Tibial artery (tissue), 4 donors: ENCODE measurements at regions of chr5 and their contacts with region 1.

Region 1: DNA sequence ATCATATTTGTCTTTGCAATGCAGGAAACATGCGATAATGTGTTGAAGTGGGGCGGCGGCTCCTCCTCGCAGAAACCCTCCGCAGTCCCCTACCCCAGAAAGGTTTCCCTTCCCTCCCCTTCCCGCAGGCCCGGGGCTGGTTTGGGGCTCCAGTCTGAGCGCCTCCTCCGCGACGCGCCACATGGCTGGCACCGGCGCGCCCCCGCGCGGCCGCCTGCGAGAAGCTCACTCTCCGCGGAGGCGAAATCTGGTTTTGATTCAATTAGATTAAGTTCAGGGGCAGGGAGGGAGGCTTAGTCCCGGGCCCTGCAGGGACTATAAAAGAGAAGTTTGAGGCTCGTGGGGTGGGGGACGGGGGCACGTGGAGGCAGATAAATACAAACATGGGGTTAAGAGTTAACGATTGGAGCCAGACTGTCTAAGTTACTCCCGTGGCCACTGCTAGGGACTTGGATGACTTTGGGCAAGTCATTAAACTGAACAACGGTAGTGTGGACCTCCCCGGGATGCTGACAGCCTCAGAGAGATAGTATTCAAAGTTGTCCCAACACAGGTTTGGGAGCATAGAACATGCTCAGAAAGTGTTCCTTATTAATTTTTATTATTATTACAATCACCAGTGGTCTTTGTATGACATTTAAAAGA is 69.4 kb downstream of the MSX2 start:
- DNase-seq: peak; percentile 51 to 72
- H3K4me3 ChIP-seq: no peak overlapping the region
- H3K27ac ChIP-seq: no peak overlapping the region
- H3K4me1 ChIP-seq: peaks cover 0 to 8% (median 3%) of the 10 kb centered on the region in 4 donors
- H3K27me3 ChIP-seq: peaks cover 0 to 61% of the 10 kb centered on the region in 2 donors
- CTCF ChIP-seq: peak; percentile 78 to 80

Region 2: DNA sequence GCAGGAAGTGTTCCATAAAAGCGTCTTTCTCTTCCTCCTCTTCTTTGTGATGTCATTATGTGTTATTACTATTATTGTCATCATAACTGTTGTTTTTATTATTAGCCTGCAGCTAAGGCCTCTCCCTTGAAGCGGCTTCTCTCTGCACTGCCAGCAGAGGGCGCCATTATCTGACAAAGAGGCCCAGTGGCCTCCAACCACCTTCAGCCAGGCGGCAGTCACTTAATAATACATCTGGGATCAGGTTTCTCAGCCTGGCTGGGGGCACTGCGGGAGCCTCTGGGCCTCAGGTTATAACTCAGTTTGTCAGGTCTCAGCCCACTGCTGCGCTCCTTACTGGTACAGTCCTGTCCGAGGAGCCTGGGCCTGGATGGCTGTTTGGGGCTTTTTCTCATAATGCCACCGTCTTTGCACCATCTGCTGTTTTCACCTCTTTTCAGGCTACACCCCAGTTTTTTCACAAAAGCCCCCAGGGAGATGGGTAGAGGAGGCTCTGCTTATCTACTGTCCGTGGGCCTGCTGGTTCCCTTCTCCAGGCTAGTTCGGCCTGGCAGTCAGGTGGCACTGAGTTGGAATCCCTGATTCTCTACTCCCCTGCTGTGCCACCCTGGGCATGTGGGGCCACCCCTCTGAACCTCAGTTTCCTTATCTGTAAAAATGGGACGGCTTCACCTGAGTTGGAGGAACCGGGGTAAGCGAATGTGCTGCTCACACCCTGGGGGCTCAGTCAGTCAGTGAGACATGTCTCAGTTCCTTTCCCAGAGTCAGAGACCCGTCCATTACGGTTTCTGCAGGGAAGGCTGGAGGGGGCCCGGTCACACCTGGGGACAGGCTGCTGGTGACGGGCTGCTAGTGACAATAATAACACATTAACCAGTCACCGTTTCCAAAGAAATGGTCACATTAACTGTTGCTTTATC is 466.2 kb before region 1 on chr5:
- intact Hi-C with region 1: loop called (anchors 5 kb)
- DNase-seq: peak in 1 of 2 donors; percentile 41
- H3K4me3 ChIP-seq: no peak overlapping the region
- H3K27ac ChIP-seq: no peak overlapping the region
- H3K4me1 ChIP-seq: no peaks in the 10 kb centered on the region
- H3K27me3 ChIP-seq: peaks cover 0 to 23% of the 10 kb centered on the region in 2 donors
- CTCF ChIP-seq: peak; percentile 35 to 38

Region 3: DNA sequence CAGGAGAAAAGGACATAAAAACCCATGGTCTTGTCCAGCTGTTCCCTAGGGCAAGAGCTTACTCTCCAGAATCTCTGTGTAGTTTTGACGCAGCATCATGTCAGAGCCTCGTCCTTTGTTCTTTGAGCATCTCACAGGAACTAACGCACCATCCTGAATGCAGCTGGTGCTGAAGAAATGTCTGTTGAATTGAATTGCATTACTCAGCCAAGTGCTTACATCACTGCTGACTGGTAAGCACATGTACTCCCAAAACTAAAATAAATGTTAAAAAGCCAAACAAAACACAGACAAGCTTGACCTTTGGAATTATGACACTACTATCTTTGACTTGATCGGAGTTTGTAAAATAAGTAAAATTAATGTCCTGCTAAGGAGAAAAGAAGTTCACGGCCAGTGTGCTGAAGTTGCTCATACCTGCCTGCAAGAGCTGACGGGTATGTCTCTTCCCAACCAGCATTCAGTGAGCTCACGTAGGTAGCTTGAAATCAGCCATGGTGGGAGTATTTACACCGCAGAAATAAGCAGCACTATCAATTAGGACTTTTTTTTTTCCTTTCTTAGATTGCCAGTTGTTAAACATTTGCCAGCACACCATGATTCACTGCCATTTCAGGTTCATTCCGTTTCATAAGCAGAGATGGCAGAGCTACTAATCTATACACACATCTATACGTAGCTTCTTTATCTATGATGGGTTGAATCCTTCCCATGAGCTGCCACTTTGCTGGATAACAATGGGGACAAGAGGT is 380.1 kb before region 1 on chr5:
- intact Hi-C with region 1: loop called (anchors 2 kb)
- DNase-seq: no peak
- H3K4me3 ChIP-seq: no peak overlapping the region
- H3K27ac ChIP-seq: no peak overlapping the region
- H3K4me1 ChIP-seq: peaks cover 0 to 19% (median 4%) of the 10 kb centered on the region in 4 donors
- H3K27me3 ChIP-seq: peaks cover 0 to 7% of the 10 kb centered on the region in 2 donors
- CTCF ChIP-seq: no peak

Region 4: GRCh38 chr5:174760721-174761120 is 33.1 kb before region 1 on chr5:
- intact Hi-C with region 1: no loop called
- DNase-seq: no peak
- H3K4me3 ChIP-seq: no peak overlapping the region
- H3K27ac ChIP-seq: no peak overlapping the region
- H3K4me1 ChIP-seq: no peaks in the 10 kb centered on the region
- H3K27me3 ChIP-seq: peaks cover 0 to 2% of the 10 kb centered on the region in 2 donors
- CTCF ChIP-seq: no peak